Heart left ventricle (tissue), 16 donors: ENCODE measurements at regions of chr3 and their contacts with region 1.

Region 1: DNA sequence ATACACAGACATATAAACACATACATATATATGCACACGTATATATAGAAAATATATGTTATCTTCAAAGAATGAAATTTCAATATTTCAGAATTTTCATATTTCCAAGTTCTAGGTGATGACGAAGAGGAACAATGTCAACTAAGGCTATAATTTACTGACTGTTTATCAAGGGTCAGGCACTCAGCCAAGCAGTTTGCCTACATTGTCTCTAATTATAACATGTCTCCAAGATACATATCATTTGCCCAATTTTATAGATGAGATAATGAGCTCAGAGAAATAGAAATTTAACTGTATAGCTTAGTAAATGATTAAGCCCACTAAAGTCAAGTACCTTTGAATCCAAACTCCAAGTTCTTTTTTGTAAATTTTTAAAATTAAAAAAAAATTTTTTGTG is 99.9 kb upstream of the PLSCR4 start:
- DNase-seq: no peak
- ATAC-seq: no peak
- H3K4me3 ChIP-seq: no peak overlapping the region
- H3K27ac ChIP-seq: no peak overlapping the region
- H3K4me1 ChIP-seq: no peaks in the 10 kb centered on the region
- H3K27me3 ChIP-seq: no peaks in the 10 kb centered on the region
- CTCF ChIP-seq: no peak
- POLR2A ChIP-seq: no peak

Region 2: GRCh38 chr3:146404436-146404835 is 53.6 kb after region 1 on chr3:
- intact Hi-C with region 1: loop called in 1 of 10 experiments (anchors 2 kb)
- DNase-seq: no peak
- ATAC-seq: no peak
- H3K4me3 ChIP-seq: no peak overlapping the region
- H3K27ac ChIP-seq: no peak overlapping the region
- H3K4me1 ChIP-seq: no peaks in the 10 kb centered on the region
- H3K27me3 ChIP-seq: no peaks in the 10 kb centered on the region
- CTCF ChIP-seq: no peak
- POLR2A ChIP-seq: no peak